Activated T-helper 1 cell treated with anti-CD3 and anti-CD28 coated beads, Interleukin-12 subunit alpha, Interleukin-12 subunit beta, Interleukin-2, Interleukin-4 antibody, amounts not matched to agents 30 ng/mL and 10 ng/mL and 1 ng/mL, durations not matched to agents 14 hours and 24 hours and 36 hours (primary cell): ENCODE measurements at regions of chr19 and their contacts with region 1.

Region 1: DNA sequence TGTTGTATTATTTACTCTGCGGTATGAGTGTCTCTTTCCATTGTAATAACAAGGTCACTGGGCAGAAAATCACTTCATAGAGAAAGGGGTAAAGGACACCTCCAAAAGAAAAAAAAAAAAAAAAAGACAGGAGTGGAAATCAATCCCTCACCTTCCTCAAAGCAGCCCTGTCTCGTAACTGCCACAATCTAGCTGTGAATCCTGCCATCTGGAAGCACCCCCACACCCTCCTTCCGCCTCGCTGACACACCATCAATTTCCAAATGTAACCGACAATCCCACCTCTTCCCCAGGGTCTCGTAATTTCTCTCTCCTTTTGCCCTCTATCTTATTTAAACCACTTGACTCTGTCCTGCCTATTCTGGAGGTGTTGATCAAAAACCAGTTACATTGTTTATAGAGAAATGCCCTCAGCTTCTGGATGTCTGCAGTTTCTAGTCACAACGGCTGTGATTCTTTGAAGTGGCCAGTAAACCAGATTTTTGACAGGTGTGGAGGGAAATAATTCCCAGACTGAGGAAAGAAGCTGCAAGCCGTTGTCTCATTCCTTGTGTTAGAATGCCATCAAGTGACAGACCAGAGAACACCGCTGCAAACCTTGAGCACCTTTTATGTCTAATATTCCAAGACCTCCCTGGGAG is 9.1 kb upstream of the POP4 start:
- DNase-seq: no peak
- H3K4me3 Mint-ChIP-seq: no peak overlapping the region
- H3K27ac Mint-ChIP-seq: no peak overlapping the region
- H3K4me1 Mint-ChIP-seq: no peaks in the 10 kb centered on the region
- H3K27me3 Mint-ChIP-seq: peaks cover 20% of the 10 kb centered on the region

Region 2: GRCh38 chr19:29467824-29468401 is 129.1 kb before region 1 on chr19:
- intact Hi-C with region 1: loop called (anchors 5 kb)
- DNase-seq: peak; percentile 8
- H3K4me3 Mint-ChIP-seq: no peak overlapping the region
- H3K27ac Mint-ChIP-seq: no peak overlapping the region
- H3K4me1 Mint-ChIP-seq: no peaks in the 10 kb centered on the region
- H3K27me3 Mint-ChIP-seq: peaks cover 17% of the 10 kb centered on the region

Region 3: DNA sequence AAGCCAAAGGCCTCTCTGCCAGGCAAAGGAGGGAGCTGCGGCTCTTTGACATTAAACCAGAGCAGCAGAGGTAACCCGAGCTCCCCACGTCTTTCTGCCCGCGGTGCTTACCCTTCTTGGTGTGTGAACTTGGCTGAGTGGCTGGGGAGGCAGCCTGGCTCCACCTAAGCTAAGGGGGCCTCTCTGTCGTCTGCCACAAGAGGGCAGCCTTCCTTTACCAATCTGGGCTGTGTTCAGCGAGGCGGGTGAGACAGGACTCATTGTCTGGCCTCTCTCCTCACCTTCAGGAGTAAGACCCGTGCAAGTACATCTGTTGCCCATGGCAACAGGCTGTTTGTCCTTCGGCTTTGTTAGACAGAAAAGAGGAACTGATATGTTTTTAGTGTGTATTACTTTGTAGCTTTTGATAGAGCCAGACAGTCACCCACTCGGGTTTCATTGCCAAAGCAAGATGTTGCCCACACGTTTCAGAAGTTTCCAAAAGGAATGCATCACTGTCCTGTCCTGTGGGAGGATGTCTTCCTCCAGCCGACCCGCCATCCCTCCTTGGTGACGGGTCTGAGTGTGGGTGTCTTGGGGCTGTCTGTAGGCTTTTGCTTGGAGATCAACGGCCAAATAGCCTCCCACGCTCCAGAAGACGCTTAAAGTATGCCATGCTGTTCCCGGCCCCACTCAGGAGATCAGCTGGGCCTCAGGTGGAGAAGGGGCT is 13.7 kb after region 1 on chr19:
- intact Hi-C with region 1: no loop called
- DNase-seq: peak; percentile 76
- H3K4me3 Mint-ChIP-seq: peak overlapping the region; percentile 19
- H3K27ac Mint-ChIP-seq: peak overlapping the region; percentile 6
- H3K4me1 Mint-ChIP-seq: peaks cover 19% of the 10 kb centered on the region
- H3K27me3 Mint-ChIP-seq: no peaks in the 10 kb centered on the region

Region 4: GRCh38 chr19:29645911-29646310 is 48.9 kb after region 1 on chr19:
- intact Hi-C with region 1: no loop called
- DNase-seq: no peak
- H3K4me3 Mint-ChIP-seq: no peak overlapping the region
- H3K27ac Mint-ChIP-seq: peak overlapping the region; percentile 36
- H3K4me1 Mint-ChIP-seq: peaks cover 20% of the 10 kb centered on the region
- H3K27me3 Mint-ChIP-seq: peaks cover 4% of the 10 kb centered on the region

Region 5: DNA sequence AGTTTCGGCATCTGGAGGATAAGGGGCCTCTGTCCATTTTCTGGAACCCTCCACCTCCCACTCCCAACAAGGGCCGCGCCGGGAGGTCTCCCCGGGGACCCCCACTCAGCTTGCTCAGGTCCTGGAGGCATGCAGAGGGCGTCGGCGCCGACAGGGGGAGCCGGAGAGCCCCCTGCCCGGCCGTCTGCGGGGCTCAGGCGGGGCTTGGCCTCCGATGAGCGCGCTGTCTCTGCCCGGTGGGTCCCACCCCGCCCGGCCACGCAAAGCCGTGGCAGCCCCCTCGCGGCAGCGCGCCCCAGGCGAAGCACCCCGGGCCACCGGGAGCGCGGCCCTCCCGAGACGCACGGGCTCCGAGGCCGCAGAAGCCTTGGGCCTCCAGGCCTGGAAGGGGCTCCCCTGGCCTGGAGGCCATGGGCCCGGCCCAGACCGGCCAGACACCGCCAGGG is 625.4 kb after region 1 on chr19:
- intact Hi-C with region 1: no loop called
- DNase-seq: no peak
- H3K4me3 Mint-ChIP-seq: no peak overlapping the region
- H3K27ac Mint-ChIP-seq: no peak overlapping the region
- H3K4me1 Mint-ChIP-seq: peaks cover 20% of the 10 kb centered on the region
- H3K27me3 Mint-ChIP-seq: peaks cover 53% of the 10 kb centered on the region